Uterus (tissue), 4 donors: ENCODE measurements at regions of chr12 and their contacts with region 1.

Region 1: DNA sequence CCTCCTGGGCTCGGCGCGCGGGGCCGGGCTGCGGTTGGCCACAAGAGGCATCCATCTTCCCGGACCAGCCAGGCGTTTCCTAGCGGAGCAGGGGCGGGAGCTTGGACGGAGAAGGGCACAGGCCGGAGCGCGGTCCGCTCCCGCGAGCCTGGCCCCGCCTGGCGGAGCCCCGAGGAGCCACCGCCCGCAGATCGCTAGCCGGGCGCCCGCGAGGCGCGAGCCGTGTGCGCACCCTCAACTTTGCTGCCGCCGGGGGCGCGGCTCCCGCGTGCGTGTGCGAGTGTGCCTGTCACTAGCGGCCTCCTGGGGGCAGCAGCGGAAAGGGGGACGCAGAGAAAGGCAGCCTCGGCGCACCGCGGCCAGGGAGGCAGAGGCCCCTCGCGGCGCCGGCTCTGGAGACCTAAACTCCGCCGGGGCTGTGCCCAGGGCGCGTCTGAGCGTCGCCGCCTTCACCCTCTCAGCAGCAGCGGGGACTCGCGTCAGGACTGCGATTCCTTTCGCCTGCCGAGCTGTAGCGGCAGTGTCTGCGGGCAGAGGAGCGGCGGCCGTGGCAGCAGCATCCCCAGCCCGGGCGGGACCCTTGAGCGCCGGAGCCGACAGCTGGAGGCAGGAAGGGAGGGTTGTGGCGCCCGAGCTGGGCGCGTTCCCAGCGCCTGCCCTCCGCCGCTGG is 644 bp upstream of the SRGAP1 start:
- DNase-seq: peak; percentile 94
- H3K4me3 ChIP-seq: peak overlapping the region; percentile 54 to 77
- H3K27ac ChIP-seq: peak overlapping the region; percentile 90 to 94
- H3K4me1 ChIP-seq: no peaks in the 10 kb centered on the region
- H3K27me3 ChIP-seq: no peaks in the 10 kb centered on the region
- CTCF ChIP-seq: peak; percentile 84 to 100 (median 96)
- POLR2A ChIP-seq: peak; percentile 42 to 79

Region 2: DNA sequence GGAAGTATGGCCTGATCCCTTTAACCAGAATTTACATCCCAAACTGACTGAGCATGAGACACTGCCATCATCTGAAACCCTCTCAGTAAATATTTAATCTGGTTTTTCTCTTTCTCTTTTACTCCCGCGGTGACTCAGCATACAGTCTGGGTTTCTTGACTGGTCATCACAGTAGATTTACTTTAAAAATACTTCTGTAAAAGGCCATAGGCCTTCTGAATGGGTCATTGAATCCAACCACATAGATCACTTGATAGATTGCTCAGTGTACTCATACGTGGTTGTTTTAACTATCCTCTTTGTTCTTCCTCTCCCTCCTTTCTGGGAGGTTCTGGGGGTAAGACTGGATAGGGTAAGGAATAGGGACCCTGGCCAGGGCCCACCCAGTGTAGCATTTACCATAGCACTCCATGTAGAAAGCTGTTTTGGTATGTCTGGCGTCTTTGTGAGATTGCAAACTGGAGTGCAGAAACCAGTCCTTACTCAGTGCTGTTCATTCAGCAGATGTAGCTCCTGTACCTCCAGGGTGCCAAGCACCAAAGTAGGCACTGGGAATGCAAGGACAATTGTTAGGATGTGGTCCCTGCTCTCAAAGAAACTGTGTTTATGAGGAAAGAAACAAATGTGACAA is 166.3 kb after region 1 on chr12:
- intact Hi-C with region 1: no loop called
- DNase-seq: no peak
- H3K4me3 ChIP-seq: no peak overlapping the region
- H3K27ac ChIP-seq: no peak overlapping the region
- H3K4me1 ChIP-seq: no peaks in the 10 kb centered on the region
- H3K27me3 ChIP-seq: no peaks in the 10 kb centered on the region
- CTCF ChIP-seq: no peak
- POLR2A ChIP-seq: no peak

Region 3: DNA sequence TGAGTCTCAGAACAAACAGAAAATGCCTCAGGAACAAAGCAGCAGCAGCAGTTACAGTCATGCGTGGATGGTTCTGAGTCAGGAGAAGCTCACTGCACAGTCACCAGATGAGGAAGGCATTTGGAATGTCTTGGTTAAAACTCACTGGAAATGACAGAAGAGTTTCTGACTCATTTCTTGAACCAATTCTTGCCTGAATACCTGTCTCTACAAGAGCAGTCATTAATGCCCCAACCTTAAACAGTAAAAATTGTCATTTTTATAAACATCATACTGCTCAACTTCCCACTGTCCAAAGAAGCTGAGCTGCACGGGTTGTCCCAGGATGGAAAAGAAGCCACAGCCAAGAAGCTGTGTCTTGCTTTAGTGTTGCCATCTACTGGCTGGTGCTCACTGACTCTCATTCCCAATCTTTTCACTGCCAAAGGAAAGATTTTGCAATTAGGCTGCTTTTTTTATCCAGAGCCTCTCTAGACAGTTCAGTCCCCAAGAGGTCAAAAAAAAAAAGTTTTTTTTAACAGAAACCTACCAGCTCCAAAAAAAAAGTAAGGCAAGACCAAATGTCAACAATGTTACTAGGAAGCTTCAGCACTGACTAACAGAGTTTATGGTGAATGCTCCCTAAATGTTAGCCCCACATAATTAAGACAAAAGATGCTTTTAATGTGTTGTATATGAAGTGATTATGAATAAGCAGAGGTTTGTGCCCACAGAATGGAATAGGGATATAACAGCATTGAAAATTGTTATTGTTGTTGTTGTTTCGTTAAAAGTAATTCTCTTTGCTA is 337.8 kb after region 1 on chr12:
- intact Hi-C with region 1: loop called (anchors 2 kb)
- DNase-seq: peak; percentile 45 to 67
- H3K4me3 ChIP-seq: no peak overlapping the region
- H3K27ac ChIP-seq: peak overlapping the region; percentile 54 to 62
- H3K4me1 ChIP-seq: no peaks in the 10 kb centered on the region
- H3K27me3 ChIP-seq: no peaks in the 10 kb centered on the region
- CTCF ChIP-seq: peak; percentile 57 to 77 (median 72)
- POLR2A ChIP-seq: no peak

Region 4: DNA sequence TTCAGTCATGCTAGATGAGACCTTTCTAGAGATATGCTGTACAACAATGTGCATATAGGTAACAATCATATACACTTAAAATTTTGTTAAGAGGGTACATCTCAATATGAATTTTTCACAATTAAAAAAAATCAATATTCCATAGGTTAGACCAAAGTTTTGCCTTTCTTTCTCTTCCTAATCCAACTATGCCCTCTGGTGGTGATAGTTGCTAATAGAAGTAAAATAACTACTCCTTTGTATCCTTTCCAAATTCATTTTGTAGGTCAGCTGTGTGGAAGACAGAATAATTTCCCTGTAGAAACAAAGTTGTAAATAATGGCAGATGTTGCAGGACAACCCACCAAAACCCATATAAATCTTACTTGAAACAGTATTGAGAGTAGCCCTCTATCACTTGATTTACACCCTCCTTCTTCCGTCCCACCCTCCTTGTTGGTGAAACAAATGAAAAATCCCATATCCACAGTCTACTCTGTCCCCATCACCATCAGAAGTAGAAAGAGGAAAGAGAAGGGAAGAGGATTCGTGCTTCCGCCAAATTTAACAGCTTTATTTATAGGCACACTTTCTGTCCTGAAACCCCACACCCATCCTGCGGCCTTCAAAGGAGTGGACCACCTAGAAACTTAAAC is 412.4 kb after region 1 on chr12:
- intact Hi-C with region 1: loop called (anchors 5 kb)
- DNase-seq: no peak
- H3K4me3 ChIP-seq: no peak overlapping the region
- H3K27ac ChIP-seq: no peak overlapping the region
- H3K4me1 ChIP-seq: no peaks in the 10 kb centered on the region
- H3K27me3 ChIP-seq: no peaks in the 10 kb centered on the region
- CTCF ChIP-seq: peak; percentile 77 to 80 (median 79)
- POLR2A ChIP-seq: no peak